CD4-positive, alpha-beta memory T cell (primary cell): ENCODE measurements at regions of chr5 and their contacts with region 1.

Region 1: GRCh38 chr5:67746105-67746554 is 469.4 kb upstream of the PIK3R1 start:
- DNase-seq: no peak
- H3K4me3 ChIP-seq: no peak overlapping the region
- H3K4me3 Mint-ChIP-seq: peak overlapping the region in 1 of 8 donors; percentile 18
- H3K27ac ChIP-seq: no peak overlapping the region
- H3K27ac Mint-ChIP-seq: no peak overlapping the region
- H3K4me1 ChIP-seq: no peaks in the 10 kb centered on the region
- H3K4me1 Mint-ChIP-seq: no peaks in the 10 kb centered on the region
- H3K27me3 ChIP-seq: no peaks in the 10 kb centered on the region
- H3K27me3 Mint-ChIP-seq: peaks cover 6 to 11% of the 10 kb centered on the region in 2 donors

Region 2: GRCh38 chr5:67133776-67134175 is 612.4 kb before region 1 on chr5:
- CTCF ChIA-PET with region 1: no interaction called
- POLR2A ChIA-PET with region 1: no interaction called
- intact Hi-C with region 1: no loop called
- DNase-seq: no peak
- H3K4me3 ChIP-seq: no peak overlapping the region
- H3K4me3 Mint-ChIP-seq: no peak overlapping the region
- H3K27ac ChIP-seq: no peak overlapping the region
- H3K27ac Mint-ChIP-seq: no peak overlapping the region
- H3K4me1 ChIP-seq: no peaks in the 10 kb centered on the region
- H3K4me1 Mint-ChIP-seq: no peaks in the 10 kb centered on the region
- H3K27me3 ChIP-seq: no peaks in the 10 kb centered on the region
- H3K27me3 Mint-ChIP-seq: no peaks in the 10 kb centered on the region

Region 3: DNA sequence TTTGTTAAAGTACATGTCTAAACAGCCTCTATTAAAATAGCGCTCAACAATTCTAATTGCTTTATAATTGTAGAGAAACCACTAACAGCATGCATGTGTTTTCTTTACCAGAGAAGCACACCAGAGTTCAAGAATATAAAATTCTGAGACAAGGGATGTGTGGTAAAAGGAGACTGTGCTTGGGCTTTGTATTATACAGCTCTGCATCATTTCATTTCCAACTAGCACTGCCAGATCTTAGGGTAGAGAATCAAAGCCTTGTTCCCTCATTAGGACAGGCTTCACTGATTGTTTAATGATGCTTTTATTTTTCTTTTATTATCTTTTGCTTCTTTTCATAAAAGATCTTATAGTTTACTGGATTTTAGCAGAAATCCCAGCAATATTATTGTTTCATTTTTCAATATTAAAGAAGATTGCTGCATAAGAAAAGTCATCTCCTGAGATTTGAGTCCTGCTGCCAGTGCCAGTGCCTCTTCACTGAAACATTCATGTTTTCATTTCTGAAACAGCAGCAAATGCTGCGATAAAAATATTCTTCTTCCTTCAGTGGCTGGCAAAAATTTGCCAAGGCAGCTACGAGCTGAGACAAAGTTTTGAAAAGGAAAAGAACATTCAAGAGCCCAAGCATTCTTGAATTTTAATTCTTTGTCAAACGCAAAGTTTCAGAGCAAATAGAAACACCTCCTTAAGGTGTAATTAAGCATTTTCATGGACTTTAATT is 21.6 kb before region 1 on chr5:
- CTCF ChIA-PET with region 1: no interaction called
- POLR2A ChIA-PET with region 1: no interaction called
- intact Hi-C with region 1: no loop called
- DNase-seq: no peak
- H3K4me3 ChIP-seq: no peak overlapping the region
- H3K4me3 Mint-ChIP-seq: no peak overlapping the region
- H3K27ac ChIP-seq: no peak overlapping the region
- H3K27ac Mint-ChIP-seq: no peak overlapping the region
- H3K4me1 ChIP-seq: no peaks in the 10 kb centered on the region
- H3K4me1 Mint-ChIP-seq: no peaks in the 10 kb centered on the region
- H3K27me3 ChIP-seq: no peaks in the 10 kb centered on the region
- H3K27me3 Mint-ChIP-seq: peaks cover 0 to 1% of the 10 kb centered on the region in 2 donors

Region 4: DNA sequence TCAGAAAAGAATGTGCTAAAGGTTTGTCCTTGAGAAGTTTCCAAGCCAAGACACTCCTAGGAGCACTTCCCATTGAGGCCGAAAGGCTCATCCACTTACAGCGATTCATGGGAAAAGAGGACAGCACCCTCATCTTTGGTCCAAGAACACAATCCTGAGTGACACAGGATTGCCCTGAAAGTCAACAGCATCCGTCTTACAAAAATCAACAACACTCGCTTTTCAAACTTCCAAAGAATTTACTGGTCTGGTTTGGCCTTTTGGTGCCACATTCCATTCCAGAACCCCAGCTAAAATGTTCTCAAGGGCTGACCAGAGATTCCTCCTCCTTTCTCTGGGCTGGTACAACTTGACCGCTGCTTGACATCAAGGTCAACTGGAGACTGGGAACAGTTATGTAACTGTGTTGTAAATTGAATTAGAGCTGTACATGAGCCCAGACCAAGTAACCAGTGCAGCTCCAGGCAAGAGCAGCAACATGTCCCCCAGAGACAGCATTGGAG is 53.7 kb after region 1 on chr5:
- CTCF ChIA-PET with region 1: no interaction called
- POLR2A ChIA-PET with region 1: no interaction called
- intact Hi-C with region 1: loop called (anchors 10 kb)
- DNase-seq: no peak
- H3K4me3 ChIP-seq: no peak overlapping the region
- H3K4me3 Mint-ChIP-seq: no peak overlapping the region
- H3K27ac ChIP-seq: no peak overlapping the region
- H3K27ac Mint-ChIP-seq: no peak overlapping the region
- H3K4me1 ChIP-seq: no peaks in the 10 kb centered on the region
- H3K4me1 Mint-ChIP-seq: no peaks in the 10 kb centered on the region
- H3K27me3 ChIP-seq: no peaks in the 10 kb centered on the region
- H3K27me3 Mint-ChIP-seq: peaks cover 0 to 6% of the 10 kb centered on the region in 2 donors